ENCODE measurements at regions of chr1 and their contacts with region 1.

Region 1: DNA sequence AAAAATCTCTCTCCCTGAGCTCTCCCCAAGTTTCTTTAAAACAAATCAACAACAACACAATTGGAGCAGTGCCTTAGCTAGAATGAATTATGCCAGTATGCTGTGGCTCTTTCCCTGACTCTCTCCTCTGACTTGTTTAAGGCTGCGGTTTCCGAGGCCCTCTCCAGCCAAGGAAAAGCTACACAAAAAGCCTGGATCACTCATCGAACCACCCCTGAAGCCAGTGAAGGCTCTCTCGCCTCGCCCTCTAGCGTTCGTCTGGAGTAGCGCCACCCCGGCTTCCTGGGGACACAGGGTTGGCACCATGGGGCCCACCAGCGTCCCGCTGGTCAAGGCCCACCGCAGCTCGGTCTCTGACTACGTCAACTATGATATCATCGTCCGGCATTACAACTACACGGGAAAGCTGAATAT is 1.9 kb downstream of the S1PR1 start:
- DNase-seq: peak in 9 of 10 donors; percentile 41 to 80 (median 59)
- H3K4me3 ChIP-seq: peak overlapping the region in 57 of 59 donors; percentile 7 to 82 (median 65)
- H3K27ac ChIP-seq: peak overlapping the region in 43 of 59 donors; percentile 5 to 91 (median 56)
- H3K27me3 ChIP-seq: peaks cover 0 to 29% (median 0%) of the 10 kb centered on the region in 45 donors
- CTCF ChIP-seq: peak; percentile 64 to 92 (median 84)

Region 2: GRCh38 chr1:100921109-100921706 is 317.5 kb before region 1 on chr1:
- intact Hi-C with region 1: loop called in 1 of 2 experiments (anchors 5 kb)
- DNase-seq: no peak
- H3K4me3 ChIP-seq: no peak overlapping the region
- H3K27ac ChIP-seq: no peak overlapping the region
- H3K27me3 ChIP-seq: no peaks in the 10 kb centered on the region
- CTCF ChIP-seq: peak; percentile 63 to 90 (median 78)

Region 3: GRCh38 chr1:101025657-101026504 is 212.8 kb before region 1 on chr1 and contains the start of gene DPH5:
- intact Hi-C with region 1: loop called in 1 of 2 experiments (anchors 5 kb)
- DNase-seq: peak; percentile 81 to 93 (median 92)
- H3K4me3 ChIP-seq: peak within 1 kb of the TSS; percentile 51 to 94 (median 81)
- H3K27ac ChIP-seq: peak within 1 kb of the TSS in 55 of 59 donors; percentile 26 to 95 (median 76)
- H3K27me3 ChIP-seq: no peaks in the 10 kb centered on the region
- CTCF ChIP-seq: peak in 16 of 56 donors; percentile 0 to 41 (median 16)
- total RNA-seq, gene DPH5: 10.7 to 31.8 (median 19.2) TPM

Region 4: GRCh38 chr1:101136739-101137138 is 101.9 kb before region 1 on chr1:
- intact Hi-C with region 1: loop called (anchors 5 kb)
- DNase-seq: no peak
- H3K4me3 ChIP-seq: peak overlapping the region in 1 of 59 donors; percentile 12
- H3K27ac ChIP-seq: no peak overlapping the region
- H3K27me3 ChIP-seq: peaks cover 0 to 3% (median 0%) of the 10 kb centered on the region in 45 donors
- CTCF ChIP-seq: peak in 43 of 56 donors; percentile 4 to 67 (median 28)

Region 5: GRCh38 chr1:101203820-101204540 is 34.7 kb before region 1 on chr1:
- intact Hi-C with region 1: no loop called
- DNase-seq: peak in 1 of 10 donors; percentile 11
- H3K4me3 ChIP-seq: no peak overlapping the region
- H3K27ac ChIP-seq: peak overlapping the region in 28 of 59 donors; percentile 1 to 80 (median 42)
- H3K27me3 ChIP-seq: no peaks in the 10 kb centered on the region
- CTCF ChIP-seq: no peak

Region 6: DNA sequence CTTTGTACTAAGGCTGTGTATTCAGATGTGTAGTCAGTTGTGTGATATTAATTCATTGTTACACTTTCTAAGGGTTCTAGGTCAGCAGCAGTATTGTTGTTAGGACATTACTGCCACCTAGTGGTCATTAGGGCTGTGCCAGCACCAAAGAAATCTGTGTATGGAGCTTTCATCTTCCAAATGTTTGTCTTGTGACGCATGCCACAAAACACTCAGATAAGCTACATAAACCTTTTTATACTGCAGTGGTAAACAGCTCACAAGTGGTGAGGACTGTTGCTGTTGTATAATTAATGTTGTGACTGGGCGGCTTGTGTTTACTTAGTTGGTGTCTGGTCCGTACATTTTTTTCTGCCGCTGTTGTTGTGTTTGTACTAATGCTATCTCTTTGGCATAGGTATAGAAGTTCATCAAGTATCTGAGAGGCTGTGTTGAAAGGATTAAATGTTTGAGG is 49.8 kb after region 1 on chr1:
- intact Hi-C with region 1: loop called in 1 of 2 experiments (anchors 5 kb)
- DNase-seq: peak in 8 of 10 donors; percentile 32 to 77 (median 60)
- H3K4me3 ChIP-seq: peak overlapping the region in 14 of 59 donors; percentile 2 to 45 (median 24)
- H3K27ac ChIP-seq: no peak overlapping the region
- H3K27me3 ChIP-seq: no peaks in the 10 kb centered on the region
- CTCF ChIP-seq: peak; percentile 83 to 98 (median 92)